ENCODE measurements at regions of chr7 and their contacts with region 1.

Region 1: GRCh38 chr7:77843194-77843593 is 44.6 kb downstream of the PHTF2 start:
- DNase-seq: no peak
- ATAC-seq: no peak

Region 2: GRCh38 chr7:77827999-77828398 is 15.2 kb before region 1 on chr7:
- intact Hi-C with region 1: loop called in 1 of 2 experiments (anchors 2 kb)
- DNase-seq: no peak
- ATAC-seq: no peak